ENCODE measurements at regions of chr22 and their contacts with region 1.

Region 1: GRCh38 chr22:43230971-43231723 is 44.2 kb upstream of the TTLL12 start:
- DNase-seq: peak; percentile 55 to 82 (median 58)
- ATAC-seq: peak; percentile 88
- H3K4me3 ChIP-seq: no peak overlapping the region
- H3K4me3 Mint-ChIP-seq: no peak overlapping the region
- H3K27ac ChIP-seq: no peak overlapping the region
- H3K27ac Mint-ChIP-seq: no peak overlapping the region
- H3K4me1 ChIP-seq: peaks cover 6% of the 10 kb centered on the region
- H3K4me1 Mint-ChIP-seq: peaks cover 5% of the 10 kb centered on the region
- H3K27me3 ChIP-seq: no peaks in the 10 kb centered on the region
- H3K27me3 Mint-ChIP-seq: peaks cover 6% of the 10 kb centered on the region
- CTCF ChIP-seq: peak; percentile 97

Region 2: GRCh38 chr22:43001271-43002201 is 229.6 kb before region 1 on chr22:
- CTCF ChIA-PET with region 1: no interaction called
- POLR2A ChIA-PET with region 1: no interaction called
- intact Hi-C with region 1: no loop called
- DNase-seq: peak in 1 of 14 experiments; percentile 29
- ATAC-seq: peak; percentile 48
- H3K4me3 ChIP-seq: no peak overlapping the region
- H3K4me3 Mint-ChIP-seq: peak overlapping the region; percentile 5
- H3K27ac ChIP-seq: no peak overlapping the region
- H3K27ac Mint-ChIP-seq: peak overlapping the region; percentile 63
- H3K4me1 ChIP-seq: peaks cover 54% of the 10 kb centered on the region
- H3K4me1 Mint-ChIP-seq: peaks cover 91% of the 10 kb centered on the region
- H3K27me3 ChIP-seq: no peaks in the 10 kb centered on the region
- H3K27me3 Mint-ChIP-seq: no peaks in the 10 kb centered on the region
- CTCF ChIP-seq: no peak

Region 3: GRCh38 chr22:43168416-43169309 is 62.5 kb before region 1 on chr22:
- CTCF ChIA-PET with region 1: no interaction called
- POLR2A ChIA-PET with region 1: no interaction called
- intact Hi-C with region 1: no loop called
- DNase-seq: no peak
- ATAC-seq: no peak
- H3K4me3 ChIP-seq: no peak overlapping the region
- H3K4me3 Mint-ChIP-seq: no peak overlapping the region
- H3K27ac ChIP-seq: no peak overlapping the region
- H3K27ac Mint-ChIP-seq: no peak overlapping the region
- H3K4me1 ChIP-seq: peaks cover 3% of the 10 kb centered on the region
- H3K4me1 Mint-ChIP-seq: no peaks in the 10 kb centered on the region
- H3K27me3 ChIP-seq: no peaks in the 10 kb centered on the region
- H3K27me3 Mint-ChIP-seq: no peaks in the 10 kb centered on the region
- CTCF ChIP-seq: no peak

Region 4: GRCh38 chr22:43346521-43346929 is 115.4 kb after region 1 on chr22:
- CTCF ChIA-PET with region 1: interaction called, 30 read pairs
- POLR2A ChIA-PET with region 1: no interaction called
- intact Hi-C with region 1: loop called (anchors 1 kb)
- DNase-seq: peak; percentile 42 to 77 (median 62)
- ATAC-seq: peak; percentile 62
- H3K4me3 ChIP-seq: no peak overlapping the region
- H3K4me3 Mint-ChIP-seq: no peak overlapping the region
- H3K27ac ChIP-seq: no peak overlapping the region
- H3K27ac Mint-ChIP-seq: no peak overlapping the region
- H3K4me1 ChIP-seq: peaks cover 21% of the 10 kb centered on the region
- H3K4me1 Mint-ChIP-seq: peaks cover 7% of the 10 kb centered on the region
- H3K27me3 ChIP-seq: peaks cover 21 to 23% of the 10 kb centered on the region in 2 experiments
- H3K27me3 Mint-ChIP-seq: peaks cover 69% of the 10 kb centered on the region
- CTCF ChIP-seq: peak; percentile 81

Region 5: GRCh38 chr22:43385770-43386641 is 154.9 kb after region 1 on chr22:
- CTCF ChIA-PET with region 1: interaction called, 4 read pairs
- POLR2A ChIA-PET with region 1: no interaction called
- intact Hi-C with region 1: loop called (anchors 1 to 2 kb)
- DNase-seq: peak; percentile 50 to 85 (median 63)
- ATAC-seq: peak; percentile 92
- H3K4me3 ChIP-seq: no peak overlapping the region
- H3K4me3 Mint-ChIP-seq: no peak overlapping the region
- H3K27ac ChIP-seq: no peak overlapping the region
- H3K27ac Mint-ChIP-seq: no peak overlapping the region
- H3K4me1 ChIP-seq: peaks cover 26% of the 10 kb centered on the region
- H3K4me1 Mint-ChIP-seq: peaks cover 4% of the 10 kb centered on the region
- H3K27me3 ChIP-seq: peaks cover 13 to 14% of the 10 kb centered on the region in 2 experiments
- H3K27me3 Mint-ChIP-seq: peaks cover 30% of the 10 kb centered on the region
- CTCF ChIP-seq: peak; percentile 85